Gastrocnemius medialis (tissue), 4 donors: ENCODE measurements at regions of chr21 and their contacts with region 1.

Region 1: DNA sequence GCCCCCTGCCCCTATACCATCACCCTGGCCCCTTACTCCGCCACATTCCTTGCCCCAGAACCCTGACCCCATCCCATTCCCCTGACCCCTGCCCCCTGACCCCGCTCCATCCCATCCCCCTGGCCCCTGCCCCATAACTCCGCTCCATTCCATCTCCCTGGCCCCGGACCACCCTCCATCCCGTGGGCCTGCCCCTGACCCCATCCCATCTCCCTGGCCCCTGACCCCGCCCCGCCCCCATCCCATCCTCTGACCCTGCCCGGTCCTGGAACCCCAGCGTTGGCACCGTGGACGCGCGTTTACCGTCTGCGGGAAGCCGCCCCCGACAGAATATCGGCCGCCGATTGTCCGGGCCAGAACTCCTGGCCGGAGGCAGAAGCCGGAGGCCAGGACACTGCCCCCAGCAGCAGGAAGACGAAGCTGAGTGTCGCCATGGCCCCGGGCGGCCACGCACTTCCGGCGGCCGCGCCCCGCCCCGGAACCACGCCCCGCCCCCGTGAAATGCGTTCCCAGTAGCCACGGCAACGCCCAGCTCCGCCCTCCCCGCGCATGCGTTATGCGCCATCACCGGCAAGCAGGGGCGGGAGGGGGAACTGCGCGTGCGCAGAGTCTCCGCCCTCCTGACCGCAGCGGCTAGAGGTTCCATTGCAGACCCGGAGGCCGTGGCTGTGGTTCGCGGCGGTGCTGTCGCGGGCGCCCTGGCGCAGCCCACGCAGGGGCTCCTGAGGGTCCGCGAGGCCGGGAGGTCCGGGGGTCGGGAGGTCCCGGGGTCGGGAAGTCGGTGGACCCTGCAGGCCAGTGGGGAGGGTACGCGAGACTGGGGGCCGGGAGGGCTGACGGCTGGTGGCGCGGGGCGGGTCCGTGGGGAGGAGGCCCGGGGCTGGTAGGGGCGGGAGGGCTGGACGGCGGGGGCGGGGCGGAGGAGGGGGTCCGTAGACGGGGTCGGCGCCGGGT is at the start of gene POFUT2:
- DNase-seq: peak; percentile 91 to 95
- ATAC-seq: peak; percentile 92 to 96
- H3K4me3 ChIP-seq: peak within 1 kb of the TSS; percentile 84 to 94 (median 86)
- H3K27ac ChIP-seq: peak within 1 kb of the TSS; percentile 83 to 90 (median 86)
- H3K4me1 ChIP-seq: peaks cover 16 to 25% of the 10 kb centered on the region in 2 donors
- H3K27me3 ChIP-seq: no peaks in the 10 kb centered on the region
- CTCF ChIP-seq: no peak
- POLR2A ChIP-seq: peak; percentile 67 to 72
- total RNA-seq, gene POFUT2: 4.8 to 11.0 (median 5.9) TPM

Region 2: GRCh38 chr21:44939532-44940115 is 348.1 kb before region 1 on chr21 and contains the start of gene SLX9:
- in situ Hi-C with region 1: loop called in 1 of 4 experiments (anchors 25 kb)
- intact Hi-C with region 1: no loop called
- DNase-seq: peak; percentile 61 to 69
- ATAC-seq: peak; percentile 87 to 90
- H3K4me3 ChIP-seq: peak within 1 kb of the TSS; percentile 71 to 95 (median 83)
- H3K27ac ChIP-seq: peak within 1 kb of the TSS; percentile 78 to 91 (median 84)
- H3K4me1 ChIP-seq: peaks cover 26 to 29% of the 10 kb centered on the region in 2 donors
- H3K27me3 ChIP-seq: no peaks in the 10 kb centered on the region
- CTCF ChIP-seq: no peak
- POLR2A ChIP-seq: peak; percentile 63 to 76
- total RNA-seq, gene SLX9: 23.7 to 37.6 (median 25.8) TPM

Region 3: DNA sequence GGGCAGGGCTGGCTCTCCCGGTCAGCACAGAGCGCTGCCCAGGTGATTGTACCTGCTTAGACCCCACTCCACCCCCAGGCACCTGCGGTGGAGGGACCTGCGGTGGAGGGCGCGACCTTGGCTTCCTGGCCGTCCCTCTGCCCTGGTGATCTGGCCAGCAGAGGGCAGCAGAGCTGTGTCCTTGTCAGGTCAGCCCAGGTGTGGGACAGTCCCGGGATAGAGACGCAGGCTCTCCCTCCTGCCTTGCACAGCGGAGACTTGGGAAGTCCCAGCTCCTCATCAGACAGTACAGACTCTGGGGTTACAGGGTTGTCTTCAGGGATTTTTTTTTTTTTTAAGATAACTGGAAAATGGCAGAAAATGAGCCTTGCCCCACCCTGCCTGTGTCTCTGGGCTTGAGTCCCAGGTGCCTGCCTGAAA is 337.9 kb before region 1 on chr21:
- in situ Hi-C with region 1: loop called in 1 of 4 experiments (anchors 25 kb)
- intact Hi-C with region 1: loop called (anchors 5 kb)
- DNase-seq: peak; percentile 82 to 94
- ATAC-seq: peak; percentile 40 to 53
- H3K4me3 ChIP-seq: no peak overlapping the region
- H3K27ac ChIP-seq: peak overlapping the region; percentile 47 to 96 (median 92)
- H3K4me1 ChIP-seq: peaks cover 63 to 64% of the 10 kb centered on the region in 2 donors
- H3K27me3 ChIP-seq: no peaks in the 10 kb centered on the region
- CTCF ChIP-seq: peak; percentile 90 to 98 (median 96)
- POLR2A ChIP-seq: peak in 1 of 2 donors; percentile 8

Region 4: DNA sequence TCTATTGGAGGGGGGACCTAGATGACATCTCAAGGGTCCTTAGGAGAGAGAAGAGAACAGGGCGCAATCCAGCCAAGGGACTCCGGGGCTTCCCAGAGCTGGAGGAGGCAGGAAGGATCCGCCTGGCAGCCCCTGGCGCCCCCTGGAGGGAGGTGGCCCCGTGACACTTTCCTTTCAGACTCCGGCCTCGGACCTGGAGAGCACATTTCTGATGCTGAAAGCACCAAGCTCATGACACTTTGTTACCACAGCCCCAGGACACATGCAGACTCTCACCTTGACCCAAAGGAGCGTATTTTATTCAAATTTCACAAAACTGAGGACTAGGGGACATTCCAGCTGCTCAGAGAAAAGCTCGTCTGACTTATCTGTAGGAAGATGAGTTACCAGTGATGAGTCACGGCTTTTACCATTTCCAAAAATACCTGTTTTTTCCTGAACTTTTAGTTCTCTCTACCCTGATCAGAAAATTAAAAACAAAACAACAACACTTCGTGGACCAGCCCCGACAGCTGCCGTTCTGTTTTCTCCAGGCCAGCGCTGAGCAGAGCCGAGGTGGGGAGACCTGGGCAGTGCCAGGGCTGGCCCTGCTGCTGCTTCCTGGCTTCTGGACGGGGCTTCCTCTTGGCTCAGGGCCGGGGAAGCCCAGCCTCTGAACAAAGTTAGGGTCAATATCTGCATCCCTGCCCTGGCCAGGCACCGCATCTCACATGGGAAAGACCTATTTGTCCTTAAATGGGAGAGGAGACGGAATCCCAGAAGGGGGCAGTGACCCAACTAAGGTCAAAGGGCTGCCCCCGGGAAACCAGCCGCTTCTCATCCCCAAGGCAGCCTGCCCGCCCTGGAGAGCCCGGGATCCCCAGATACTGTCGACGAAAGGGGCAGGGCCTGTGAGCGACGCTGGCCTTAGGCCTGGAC is 21.6 kb after region 1 on chr21:
- in situ Hi-C with region 1: no loop called
- intact Hi-C with region 1: loop called (anchors 1 kb)
- DNase-seq: no peak
- ATAC-seq: peak; percentile 49 to 51
- H3K4me3 ChIP-seq: no peak overlapping the region
- H3K27ac ChIP-seq: peak overlapping the region; percentile 25 to 78 (median 58)
- H3K4me1 ChIP-seq: peaks cover 6 to 28% of the 10 kb centered on the region in 2 donors
- H3K27me3 ChIP-seq: peaks cover 16 to 32% (median 18%) of the 10 kb centered on the region in 3 donors
- CTCF ChIP-seq: peak; percentile 38 to 64 (median 51)
- POLR2A ChIP-seq: no peak

Region 5: GRCh38 chr21:45439161-45439872 is 151.6 kb after region 1 on chr21:
- in situ Hi-C with region 1: loop called (anchors 10 to 25 kb)
- intact Hi-C with region 1: loop called (anchors 1 kb)
- DNase-seq: peak; percentile 48 to 58
- ATAC-seq: peak; percentile 84 to 86
- H3K4me3 ChIP-seq: peak overlapping the region; percentile 46 to 60 (median 53)
- H3K27ac ChIP-seq: peak overlapping the region; percentile 58 to 74 (median 68)
- H3K4me1 ChIP-seq: peaks cover 6 to 10% of the 10 kb centered on the region in 2 donors
- H3K27me3 ChIP-seq: peaks cover 0 to 6% (median 0%) of the 10 kb centered on the region in 3 donors
- CTCF ChIP-seq: peak; percentile 93 to 98 (median 97)
- POLR2A ChIP-seq: no peak